Cardiac septum (tissue), 1 donor: ENCODE measurements at regions of chr3 and their contacts with region 1.

Region 1: GRCh38 chr3:39383045-39383880 is at the start of gene SLC25A38:
- DNase-seq: peak; percentile 81
- total RNA-seq, gene SLC25A38: 14.6 TPM

Region 2: GRCh38 chr3:39107388-39108199 is 275.7 kb before region 1 on chr3 and contains the starts of genes GORASP1 and TTC21A:
- intact Hi-C with region 1: loop called (anchors 5 kb)
- DNase-seq: peak; percentile 97
- total RNA-seq, gene GORASP1: 45.9 TPM
- total RNA-seq, gene TTC21A: 3.0 TPM

Region 3: GRCh38 chr3:39138804-39139415 is 244.4 kb before region 1 on chr3:
- intact Hi-C with region 1: loop called (anchors 10 kb)
- DNase-seq: no peak

Region 4: DNA sequence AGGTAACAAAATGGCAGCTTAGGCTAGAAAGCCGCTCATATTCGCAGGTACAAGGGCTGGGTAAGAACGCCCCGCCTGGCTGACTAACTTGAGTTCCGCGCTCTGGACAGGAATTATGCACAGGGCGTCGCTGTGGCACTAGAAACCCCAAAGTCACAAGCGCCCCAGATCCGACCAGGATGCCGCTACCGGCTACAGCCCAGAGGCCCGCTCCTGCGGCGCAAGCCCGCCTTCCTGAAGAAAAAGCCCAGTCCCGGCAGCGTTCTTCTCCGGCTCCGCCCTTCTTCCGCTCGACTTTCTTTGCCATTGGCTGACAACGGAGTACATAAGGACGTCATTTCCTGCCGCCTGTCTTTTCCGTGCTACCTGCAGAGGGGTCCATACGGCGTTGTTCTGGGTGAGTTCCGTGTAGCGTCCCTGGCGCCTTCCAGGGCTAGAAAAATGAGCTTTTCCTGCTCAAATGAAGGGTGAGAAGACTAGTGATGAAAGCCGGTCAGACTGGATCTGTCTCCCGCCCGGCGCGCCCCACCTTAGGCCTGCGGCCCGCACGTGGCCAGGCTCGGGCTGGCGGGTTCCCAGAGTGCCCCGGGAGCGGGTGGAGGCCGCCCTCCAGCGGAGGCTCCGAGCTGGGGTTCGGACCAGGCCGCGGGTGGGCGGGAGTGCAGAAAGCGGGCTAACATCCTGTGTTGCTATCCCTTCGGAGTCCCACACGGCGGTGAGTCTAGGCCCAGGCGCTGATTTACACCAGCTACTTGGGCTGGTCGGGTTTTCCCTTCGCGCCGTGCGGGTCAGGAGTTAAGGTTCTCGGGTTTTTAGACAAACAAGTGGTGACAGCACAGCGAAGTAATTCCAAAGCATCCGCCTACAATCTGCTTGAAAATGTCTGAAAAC is 23.4 kb after region 1 on chr3 and contains the start of gene RPSA:
- intact Hi-C with region 1: loop called (anchors 1 kb)
- DNase-seq: peak; percentile 94
- total RNA-seq, gene RPSA: 333 TPM

Region 5: DNA sequence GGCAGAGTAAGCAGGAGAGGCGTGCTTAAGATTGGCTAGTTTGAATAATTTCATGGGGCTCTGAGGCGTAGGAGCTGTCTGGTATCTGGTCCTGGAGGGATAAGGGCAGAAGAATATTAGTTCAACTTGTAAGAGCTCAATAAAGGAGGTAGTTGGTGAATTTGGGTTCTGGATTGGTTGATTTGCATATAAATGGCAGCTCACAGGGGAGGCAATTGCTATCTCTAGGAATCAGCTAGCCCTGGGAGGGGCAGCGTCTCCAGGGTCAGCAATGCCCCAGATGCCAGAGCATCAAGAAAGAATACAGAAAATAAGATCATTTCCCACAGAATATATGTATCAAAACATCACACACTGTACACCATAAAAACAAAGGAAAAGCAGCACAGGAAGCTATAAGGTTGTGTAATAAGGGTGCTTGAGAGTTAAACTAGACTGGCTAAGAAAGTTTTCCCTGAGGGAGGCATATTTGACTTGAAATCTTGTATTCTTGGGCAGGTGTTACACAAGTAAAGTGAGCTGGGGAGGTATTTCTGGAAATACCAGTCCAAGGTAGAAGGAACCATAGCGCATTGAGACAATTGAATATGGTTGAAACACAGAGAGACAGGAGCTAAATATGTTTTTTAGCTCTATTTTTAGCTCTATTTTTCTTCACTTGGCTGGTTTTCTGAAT is 90.3 kb after region 1 on chr3:
- intact Hi-C with region 1: no loop called
- DNase-seq: no peak